Endothelial cell of umbilical vein (primary cell): ENCODE measurements at regions of chr20 and their contacts with region 1.

Region 1: GRCh38 chr20:4956200-4956810 is 45.0 kb downstream of the SLC23A2 start:
- DNase-seq: peak; percentile 79
- H3K4me3 ChIP-seq: no peak overlapping the region
- H3K27ac ChIP-seq: no peak overlapping the region
- H3K4me1 ChIP-seq: peaks cover 3% of the 10 kb centered on the region
- H3K27me3 ChIP-seq: no peaks in the 10 kb centered on the region
- CTCF ChIP-seq: peak; percentile 45 to 68
- POLR2A ChIP-seq: no peak

Region 2: DNA sequence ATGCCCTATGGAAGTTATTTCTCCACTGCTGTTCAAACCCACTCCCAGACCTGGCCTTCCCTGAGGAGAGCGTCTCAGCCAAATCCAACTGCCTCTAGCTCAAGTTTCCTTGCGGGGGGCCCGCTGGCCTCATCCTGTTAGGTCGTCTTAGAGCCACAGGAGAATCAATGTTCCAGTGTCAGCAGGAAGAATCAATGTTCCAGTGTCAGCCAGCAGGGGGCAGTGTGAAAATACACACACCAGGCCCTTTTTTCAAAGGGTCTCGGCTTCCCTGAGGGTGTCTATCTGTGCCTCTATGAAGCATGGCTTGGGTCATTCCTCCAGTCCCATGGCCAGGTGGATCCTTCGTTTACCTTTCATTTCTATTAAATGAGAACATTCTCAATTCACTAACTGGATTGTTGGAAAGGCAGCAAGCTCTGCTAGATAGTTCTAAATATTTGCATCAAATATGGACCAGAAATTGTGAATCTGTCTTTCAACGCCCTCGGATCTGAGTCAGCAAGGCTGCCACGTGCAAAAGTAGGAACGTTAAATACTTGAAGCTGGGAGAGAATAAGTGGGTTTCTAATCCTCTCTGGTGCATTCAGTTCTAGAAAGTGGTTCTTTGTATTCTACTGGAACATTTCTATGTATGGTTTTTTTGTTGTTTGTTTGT is 215.4 kb before region 1 on chr20:
- CTCF ChIA-PET with region 1: interaction called, 28 read pairs
- POLR2A ChIA-PET with region 1: no interaction called
- dilution Hi-C with region 1: no loop called
- intact Hi-C with region 1: loop called (anchors 1 kb)
- DNase-seq: peak; percentile 52
- H3K4me3 ChIP-seq: no peak overlapping the region
- H3K27ac ChIP-seq: no peak overlapping the region
- H3K4me1 ChIP-seq: no peaks in the 10 kb centered on the region
- H3K27me3 ChIP-seq: peaks cover 11 to 14% of the 10 kb centered on the region in 2 experiments
- CTCF ChIP-seq: peak; percentile 78 to 81
- POLR2A ChIP-seq: no peak

Region 3: GRCh38 chr20:4916971-4917881 is 39.1 kb before region 1 on chr20:
- CTCF ChIA-PET with region 1: interaction called, 38 read pairs
- POLR2A ChIA-PET with region 1: no interaction called
- dilution Hi-C with region 1: no loop called
- intact Hi-C with region 1: no loop called
- DNase-seq: no peak
- H3K4me3 ChIP-seq: no peak overlapping the region
- H3K27ac ChIP-seq: no peak overlapping the region
- H3K4me1 ChIP-seq: peaks cover 3% of the 10 kb centered on the region
- H3K27me3 ChIP-seq: no peaks in the 10 kb centered on the region
- CTCF ChIP-seq: peak in 1 of 2 donors; percentile 14
- POLR2A ChIP-seq: no peak

Region 4: DNA sequence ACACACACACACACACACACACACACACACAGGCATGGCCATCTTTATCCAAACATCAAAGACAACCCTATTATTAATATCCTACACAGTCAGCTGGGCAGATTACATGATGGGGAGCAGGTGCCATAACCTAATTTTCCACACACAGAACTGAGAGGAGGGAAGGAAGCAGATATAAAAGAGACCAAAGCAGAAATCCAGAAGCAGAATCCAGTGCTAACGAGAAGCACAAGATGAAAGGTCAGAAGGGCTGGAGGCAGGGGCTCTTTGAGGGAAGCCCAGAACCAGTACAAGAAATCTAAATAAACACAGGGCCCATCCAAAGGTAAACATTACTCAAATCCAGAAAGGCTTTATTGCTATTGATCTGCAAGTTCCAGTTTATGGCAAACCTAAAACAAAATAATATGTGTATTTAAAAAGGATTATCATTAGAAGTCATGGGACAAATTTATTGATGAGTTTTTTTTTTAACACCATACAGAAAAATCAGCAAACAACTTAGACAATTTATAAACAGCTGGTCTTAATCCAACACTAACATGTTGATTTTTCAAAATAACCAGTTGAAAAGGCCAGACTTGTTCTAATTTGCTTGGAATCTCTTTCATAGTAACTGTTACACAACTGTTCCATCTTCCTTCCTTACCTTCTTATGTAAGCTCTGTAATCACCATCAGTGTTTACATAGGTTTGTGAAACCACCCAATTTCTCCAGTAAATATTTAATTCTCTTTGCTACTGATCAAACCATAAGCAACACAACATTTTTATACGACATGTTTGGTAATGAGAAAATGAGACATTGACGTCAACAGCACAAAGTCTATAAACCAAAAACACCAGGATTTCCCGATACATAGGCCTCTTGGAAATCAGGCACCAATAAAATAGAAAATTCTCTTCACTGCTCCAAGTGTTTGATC is 10.8 kb after region 1 on chr20:
- CTCF ChIA-PET with region 1: interaction called, 18 read pairs
- POLR2A ChIA-PET with region 1: no interaction called
- dilution Hi-C with region 1: no loop called
- intact Hi-C with region 1: loop called (anchors 2 kb)
- DNase-seq: peak; percentile 34
- H3K4me3 ChIP-seq: no peak overlapping the region
- H3K27ac ChIP-seq: no peak overlapping the region
- H3K4me1 ChIP-seq: peaks cover 5% of the 10 kb centered on the region
- H3K27me3 ChIP-seq: no peaks in the 10 kb centered on the region
- CTCF ChIP-seq: no peak
- POLR2A ChIP-seq: no peak

Region 5: DNA sequence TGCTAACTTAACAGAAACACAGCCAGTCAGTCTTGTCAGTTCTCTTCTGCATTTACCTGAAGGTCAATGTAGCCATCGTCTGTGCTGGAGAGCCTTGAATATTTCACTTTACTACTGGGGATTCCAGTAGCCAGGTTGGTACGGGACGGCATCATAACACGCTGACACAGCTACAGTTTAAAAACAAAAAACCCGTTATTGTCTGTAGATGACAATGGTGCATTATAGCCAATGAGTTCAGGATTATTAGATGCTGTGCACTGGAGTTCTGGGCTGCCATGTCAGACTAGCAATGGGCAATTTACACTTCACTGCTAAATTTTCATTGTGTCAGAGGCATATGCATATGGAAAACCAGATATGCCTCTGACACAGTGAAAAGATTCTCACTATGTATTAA is 153.0 kb after region 1 on chr20:
- CTCF ChIA-PET with region 1: no interaction called
- POLR2A ChIA-PET with region 1: no interaction called
- dilution Hi-C with region 1: no loop called
- intact Hi-C with region 1: no loop called
- DNase-seq: no peak
- H3K4me3 ChIP-seq: no peak overlapping the region
- H3K27ac ChIP-seq: no peak overlapping the region
- H3K4me1 ChIP-seq: peaks cover 15% of the 10 kb centered on the region
- H3K27me3 ChIP-seq: no peaks in the 10 kb centered on the region
- CTCF ChIP-seq: no peak
- POLR2A ChIP-seq: no peak